ENCODE measurements at regions of chr2 and their contacts with region 1.

Region 1: GRCh38 chr2:237966565-237967462 is at the start of gene UBE2F:
- DNase-seq: peak; percentile 93 to 98 (median 97)
- ATAC-seq: peak; percentile 97
- H3K4me3 ChIP-seq: peak within 1 kb of the TSS; percentile 96
- H3K4me3 Mint-ChIP-seq: peak within 1 kb of the TSS; percentile 84 to 93 (median 90)
- H3K27ac ChIP-seq: peak within 1 kb of the TSS; percentile 64
- H3K27ac Mint-ChIP-seq: peak within 1 kb of the TSS; percentile 82 to 95 (median 88)
- H3K4me1 ChIP-seq: peaks cover 13 to 35% of the 10 kb centered on the region in 2 donors
- H3K4me1 Mint-ChIP-seq: peaks cover 29 to 47% (median 44%) of the 10 kb centered on the region in 7 donors
- H3K27me3 ChIP-seq: no peaks in the 10 kb centered on the region
- H3K27me3 Mint-ChIP-seq: peaks cover 0 to 3% (median 0%) of the 10 kb centered on the region in 5 donors
- total RNA-seq, gene UBE2F: 42.5 to 80.9 (median 48.3) TPM

Region 2: GRCh38 chr2:237674731-237675276 is 292.0 kb before region 1 on chr2:
- CTCF ChIA-PET with region 1: no interaction called
- POLR2A ChIA-PET with region 1: no interaction called
- intact Hi-C with region 1: loop called in 1 of 2 experiments (anchors 5 kb)
- DNase-seq: peak; percentile 71 to 92 (median 88)
- ATAC-seq: peak; percentile 77
- H3K4me3 ChIP-seq: peak overlapping the region; percentile 66
- H3K4me3 Mint-ChIP-seq: peak overlapping the region; percentile 84 to 97 (median 90)
- H3K27ac ChIP-seq: peak overlapping the region; percentile 99
- H3K27ac Mint-ChIP-seq: peak overlapping the region; percentile 94 to 100 (median 99)
- H3K4me1 ChIP-seq: peaks cover 30 to 38% of the 10 kb centered on the region in 2 donors
- H3K4me1 Mint-ChIP-seq: peaks cover 37 to 62% (median 57%) of the 10 kb centered on the region in 7 donors
- H3K27me3 ChIP-seq: no peaks in the 10 kb centered on the region
- H3K27me3 Mint-ChIP-seq: peaks cover 0 to 6% (median 0%) of the 10 kb centered on the region in 5 donors

Region 3: DNA sequence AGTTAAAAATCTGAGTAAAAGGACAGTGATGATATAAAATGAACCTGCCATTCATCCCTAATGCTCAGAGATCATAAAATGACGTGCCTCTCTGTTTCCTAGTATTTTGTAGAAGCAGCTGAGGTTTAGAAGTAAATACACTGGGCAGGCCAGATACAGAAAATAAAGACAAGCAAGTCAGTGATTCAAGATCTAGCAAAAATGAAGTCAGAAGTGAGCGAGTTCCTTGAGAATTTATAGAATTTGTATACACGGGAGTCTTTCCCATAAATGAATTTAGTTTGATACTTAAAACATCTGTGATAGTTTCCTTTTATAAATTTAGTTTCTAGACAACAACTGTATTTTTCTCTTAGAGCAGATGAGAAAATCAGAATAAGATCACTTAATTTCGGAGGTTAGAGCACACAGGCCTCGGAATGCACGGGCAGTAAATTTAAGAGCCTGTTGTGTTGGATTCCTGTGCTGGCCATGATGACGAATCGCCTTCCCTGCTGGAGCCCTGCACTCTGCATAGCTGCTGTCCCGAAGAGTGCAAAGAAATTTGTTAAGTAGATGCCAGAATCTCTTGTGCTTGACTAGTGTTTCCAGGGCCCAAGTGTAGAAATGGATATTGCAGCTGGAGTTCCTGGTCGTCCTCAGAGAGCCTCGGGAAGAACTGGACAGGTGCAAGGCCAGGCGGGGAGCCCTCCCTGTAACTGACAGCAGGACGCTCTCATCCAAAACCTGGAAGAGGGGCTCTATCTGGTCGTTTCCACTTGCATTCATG is 251.9 kb before region 1 on chr2:
- CTCF ChIA-PET with region 1: no interaction called
- POLR2A ChIA-PET with region 1: no interaction called
- intact Hi-C with region 1: no loop called
- DNase-seq: no peak
- ATAC-seq: no peak
- H3K4me3 ChIP-seq: no peak overlapping the region
- H3K4me3 Mint-ChIP-seq: peak overlapping the region; percentile 7 to 69 (median 45)
- H3K27ac ChIP-seq: peak overlapping the region; percentile 3
- H3K27ac Mint-ChIP-seq: peak overlapping the region; percentile 14 to 91 (median 60)
- H3K4me1 ChIP-seq: peaks cover 0 to 10% of the 10 kb centered on the region in 2 donors
- H3K4me1 Mint-ChIP-seq: peaks cover 41 to 83% (median 72%) of the 10 kb centered on the region in 7 donors
- H3K27me3 ChIP-seq: no peaks in the 10 kb centered on the region
- H3K27me3 Mint-ChIP-seq: no peaks in the 10 kb centered on the region

Region 4: GRCh38 chr2:237898057-237898414 is 68.8 kb before region 1 on chr2:
- CTCF ChIA-PET with region 1: no interaction called
- POLR2A ChIA-PET with region 1: interaction called, 7 read pairs
- intact Hi-C with region 1: loop called (anchors 1 to 2 kb)
- DNase-seq: no peak
- ATAC-seq: no peak
- H3K4me3 ChIP-seq: peak overlapping the region; percentile 33
- H3K4me3 Mint-ChIP-seq: peak overlapping the region in 9 of 10 donors; percentile 29 to 86 (median 71)
- H3K27ac ChIP-seq: peak overlapping the region; percentile 38
- H3K27ac Mint-ChIP-seq: peak overlapping the region; percentile 87 to 96 (median 94)
- H3K4me1 ChIP-seq: peaks cover 19 to 29% of the 10 kb centered on the region in 2 donors
- H3K4me1 Mint-ChIP-seq: peaks cover 30 to 59% (median 48%) of the 10 kb centered on the region in 7 donors
- H3K27me3 ChIP-seq: no peaks in the 10 kb centered on the region
- H3K27me3 Mint-ChIP-seq: no peaks in the 10 kb centered on the region

Region 5: DNA sequence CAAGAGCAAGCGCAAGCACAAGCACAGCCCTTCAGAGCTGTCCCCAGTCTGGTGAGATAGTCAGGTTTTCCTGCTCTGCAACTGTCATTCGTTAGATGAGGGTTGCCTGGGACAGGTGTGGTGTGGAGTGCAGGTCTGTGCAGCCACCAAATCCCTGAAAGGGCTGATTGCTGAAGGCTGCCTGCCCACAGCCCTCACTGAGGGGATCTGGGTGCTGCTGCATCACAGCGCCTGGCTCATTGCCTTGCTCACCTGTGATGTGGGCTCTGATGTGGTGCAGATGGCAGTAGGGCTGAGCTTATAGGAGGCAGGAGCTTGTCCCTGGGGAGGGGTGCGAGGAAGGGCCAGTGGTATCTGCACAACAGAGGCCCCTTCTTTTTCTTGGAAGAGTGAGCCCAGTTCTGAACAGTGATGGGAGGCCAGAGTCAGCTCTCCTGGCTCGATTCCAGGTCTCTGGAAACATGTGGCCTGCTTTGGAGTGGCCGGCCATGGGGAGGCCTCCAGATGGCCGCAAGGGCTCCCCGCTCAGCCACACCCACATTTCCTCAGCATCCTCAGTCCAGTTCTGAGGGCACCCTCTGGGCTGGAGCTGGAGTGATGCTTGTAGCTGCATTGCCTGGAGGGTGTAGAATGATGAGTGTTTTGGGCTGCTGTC is 11.4 kb after region 1 on chr2:
- CTCF ChIA-PET with region 1: interaction called, 3 read pairs
- POLR2A ChIA-PET with region 1: interaction called, 17 read pairs
- intact Hi-C with region 1: no loop called
- DNase-seq: no peak
- ATAC-seq: no peak
- H3K4me3 ChIP-seq: no peak overlapping the region
- H3K4me3 Mint-ChIP-seq: peak overlapping the region in 5 of 10 donors; percentile 12 to 72 (median 44)
- H3K27ac ChIP-seq: no peak overlapping the region
- H3K27ac Mint-ChIP-seq: peak overlapping the region in 4 of 9 donors; percentile 39 to 70 (median 62)
- H3K4me1 ChIP-seq: peaks cover 0 to 42% of the 10 kb centered on the region in 2 donors
- H3K4me1 Mint-ChIP-seq: peaks cover 47 to 80% (median 69%) of the 10 kb centered on the region in 7 donors
- H3K27me3 ChIP-seq: no peaks in the 10 kb centered on the region
- H3K27me3 Mint-ChIP-seq: no peaks in the 10 kb centered on the region

Region 6: GRCh38 chr2:238039985-238040384 is 73.2 kb after region 1 on chr2:
- CTCF ChIA-PET with region 1: no interaction called
- POLR2A ChIA-PET with region 1: no interaction called
- intact Hi-C with region 1: no loop called
- DNase-seq: no peak
- ATAC-seq: no peak
- H3K4me3 ChIP-seq: no peak overlapping the region
- H3K4me3 Mint-ChIP-seq: no peak overlapping the region
- H3K27ac ChIP-seq: no peak overlapping the region
- H3K27ac Mint-ChIP-seq: peak overlapping the region in 1 of 9 donors; percentile 9
- H3K4me1 ChIP-seq: no peaks in the 10 kb centered on the region
- H3K4me1 Mint-ChIP-seq: peaks cover 0 to 13% (median 0%) of the 10 kb centered on the region in 7 donors
- H3K27me3 ChIP-seq: no peaks in the 10 kb centered on the region
- H3K27me3 Mint-ChIP-seq: no peaks in the 10 kb centered on the region

Region 7: GRCh38 chr2:238060542-238061314 is 93.9 kb after region 1 on chr2 and contains the start of gene SCLY:
- CTCF ChIA-PET with region 1: no interaction called
- POLR2A ChIA-PET with region 1: no interaction called
- intact Hi-C with region 1: loop called (anchors 1 kb)
- DNase-seq: peak; percentile 86 to 95 (median 93)
- ATAC-seq: peak; percentile 99
- H3K4me3 ChIP-seq: peak within 1 kb of the TSS; percentile 96
- H3K4me3 Mint-ChIP-seq: peak within 1 kb of the TSS; percentile 85 to 98 (median 88)
- H3K27ac ChIP-seq: peak within 1 kb of the TSS; percentile 85
- H3K27ac Mint-ChIP-seq: peak within 1 kb of the TSS; percentile 80 to 93 (median 90)
- H3K4me1 ChIP-seq: peaks cover 5 to 12% of the 10 kb centered on the region in 2 donors
- H3K4me1 Mint-ChIP-seq: peaks cover 24 to 57% (median 37%) of the 10 kb centered on the region in 7 donors
- H3K27me3 ChIP-seq: peaks cover 0 to 3% of the 10 kb centered on the region in 2 donors
- H3K27me3 Mint-ChIP-seq: peaks cover 3 to 16% (median 13%) of the 10 kb centered on the region in 5 donors
- total RNA-seq, gene SCLY: 16.1 to 47.3 (median 29.1) TPM

Region 8: GRCh38 chr2:238231251-238231793 is 264.5 kb after region 1 on chr2:
- CTCF ChIA-PET with region 1: no interaction called
- POLR2A ChIA-PET with region 1: no interaction called
- intact Hi-C with region 1: loop called (anchors 1 to 5 kb)
- DNase-seq: peak; percentile 37 to 84 (median 76)
- ATAC-seq: peak; percentile 94
- H3K4me3 ChIP-seq: peak overlapping the region; percentile 66
- H3K4me3 Mint-ChIP-seq: peak overlapping the region; percentile 70 to 91 (median 86)
- H3K27ac ChIP-seq: peak overlapping the region; percentile 31
- H3K27ac Mint-ChIP-seq: peak overlapping the region in 7 of 9 donors; percentile 39 to 86 (median 76)
- H3K4me1 ChIP-seq: peaks cover 5 to 8% of the 10 kb centered on the region in 2 donors
- H3K4me1 Mint-ChIP-seq: peaks cover 14 to 33% (median 26%) of the 10 kb centered on the region in 7 donors
- H3K27me3 ChIP-seq: peaks cover 0 to 5% of the 10 kb centered on the region in 2 donors
- H3K27me3 Mint-ChIP-seq: peaks cover 11 to 63% (median 16%) of the 10 kb centered on the region in 5 donors

Region 9: DNA sequence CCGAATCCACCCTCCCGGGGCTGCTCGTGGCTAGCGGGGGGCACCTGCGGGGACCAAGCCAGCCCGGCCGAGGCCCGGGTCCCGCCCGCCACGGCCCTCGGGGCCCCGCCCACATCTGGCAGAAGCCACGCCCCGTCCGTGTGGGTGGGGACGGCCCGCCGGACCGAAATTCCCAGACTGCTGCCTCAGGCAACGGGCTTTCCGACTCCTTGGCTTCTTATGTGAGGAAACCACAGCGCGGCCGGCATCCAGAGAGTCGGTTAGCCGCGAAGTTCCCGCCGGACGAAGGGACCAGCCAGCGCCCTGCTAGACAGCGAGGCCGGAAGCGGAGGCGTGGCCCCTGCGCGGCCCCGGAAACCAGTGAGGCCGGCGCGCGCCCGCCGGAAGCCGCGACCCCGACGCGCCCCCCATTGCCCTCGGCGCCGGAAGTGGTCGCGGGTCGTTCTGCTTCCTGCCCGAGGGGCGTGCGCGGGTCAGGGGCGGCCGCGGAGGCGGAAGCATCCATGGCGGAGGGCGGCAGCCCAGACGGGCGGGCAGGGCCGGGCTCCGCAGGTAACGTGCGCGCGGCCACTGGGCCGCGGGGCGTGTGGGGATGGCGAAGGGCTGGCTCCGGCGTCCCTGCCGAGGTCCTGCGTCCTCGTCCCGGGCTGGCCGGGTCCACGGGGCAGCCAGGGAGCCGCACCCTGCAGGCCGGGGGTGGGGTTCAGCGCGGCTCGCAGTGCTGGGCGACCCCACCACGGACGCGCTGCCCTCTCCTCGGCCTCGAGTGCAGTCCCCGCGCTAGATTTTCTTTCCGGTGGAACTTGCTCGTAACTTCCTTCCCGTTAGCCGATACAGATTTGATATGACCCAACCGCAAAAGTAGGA is 460.0 kb after region 1 on chr2 and contains the start of gene ASB1:
- CTCF ChIA-PET with region 1: no interaction called
- POLR2A ChIA-PET with region 1: no interaction called
- intact Hi-C with region 1: loop called in 1 of 2 experiments (anchors 2 kb)
- DNase-seq: peak; percentile 62 to 89 (median 72)
- ATAC-seq: peak; percentile 87
- H3K4me3 ChIP-seq: peak within 1 kb of the TSS; percentile 90
- H3K4me3 Mint-ChIP-seq: peak within 1 kb of the TSS; percentile 90 to 97 (median 92)
- H3K27ac ChIP-seq: peak within 1 kb of the TSS; percentile 80
- H3K27ac Mint-ChIP-seq: peak within 1 kb of the TSS; percentile 87 to 95 (median 93)
- H3K4me1 ChIP-seq: peaks cover 3 to 15% of the 10 kb centered on the region in 2 donors
- H3K4me1 Mint-ChIP-seq: peaks cover 28 to 53% (median 49%) of the 10 kb centered on the region in 7 donors
- H3K27me3 ChIP-seq: no peaks in the 10 kb centered on the region
- H3K27me3 Mint-ChIP-seq: no peaks in the 10 kb centered on the region
- total RNA-seq, gene ASB1: 25.0 to 55.2 (median 33.1) TPM

Measured in naive thymus-derived CD4-positive, alpha-beta T cell (primary cell).